Thyroid gland (tissue), 4 donors: ENCODE measurements at regions of chr13 and their contacts with region 1.

Region 1: GRCh38 chr13:100088644-100089464 is at the start of gene PCCA:
- DNase-seq: peak; percentile 97 to 98
- H3K4me3 ChIP-seq: peak within 1 kb of the TSS; percentile 44 to 84 (median 84)
- H3K27ac ChIP-seq: peak within 1 kb of the TSS in 2 of 3 donors; percentile 78 to 80
- H3K4me1 ChIP-seq: peaks cover 15 to 22% of the 10 kb centered on the region in 2 donors
- H3K27me3 ChIP-seq: no peaks in the 10 kb centered on the region
- CTCF ChIP-seq: peak in 1 of 6 experiments; percentile 9
- POLR2A ChIP-seq: peak in 1 of 2 donors; percentile 80
- total RNA-seq, gene PCCA: 54.3 to 95.2 (median 67.7) TPM

Region 2: GRCh38 chr13:100235311-100235901 is 146.6 kb after region 1 on chr13:
- intact Hi-C with region 1: loop called (anchors 10 kb)
- DNase-seq: no peak
- H3K4me3 ChIP-seq: no peak overlapping the region
- H3K27ac ChIP-seq: no peak overlapping the region
- H3K4me1 ChIP-seq: peaks cover 8% of the 10 kb centered on the region in 2 donors
- H3K27me3 ChIP-seq: no peaks in the 10 kb centered on the region
- CTCF ChIP-seq: peak in 5 of 6 experiments; percentile 39 to 93 (median 71)
- POLR2A ChIP-seq: no peak